Activated CD8-positive, alpha-beta T cell treated with anti-CD3 and anti-CD28 coated beads, Interleukin-2, amount 10 ng/mL, durations not matched to agents 7 days and 5 days (primary cell): ENCODE measurements at regions of chr6 and their contacts with region 1.

Region 1: GRCh38 chr6:26473758-26474438 is 16.1 kb downstream of the BTN2A1 start:
- DNase-seq: peak; percentile 89
- ATAC-seq: peak; percentile 98
- H3K4me3 Mint-ChIP-seq: peak overlapping the region; percentile 100
- H3K27ac Mint-ChIP-seq: peak overlapping the region; percentile 100
- H3K4me1 Mint-ChIP-seq: peaks cover 35% of the 10 kb centered on the region
- H3K27me3 Mint-ChIP-seq: no peaks in the 10 kb centered on the region

Region 2: DNA sequence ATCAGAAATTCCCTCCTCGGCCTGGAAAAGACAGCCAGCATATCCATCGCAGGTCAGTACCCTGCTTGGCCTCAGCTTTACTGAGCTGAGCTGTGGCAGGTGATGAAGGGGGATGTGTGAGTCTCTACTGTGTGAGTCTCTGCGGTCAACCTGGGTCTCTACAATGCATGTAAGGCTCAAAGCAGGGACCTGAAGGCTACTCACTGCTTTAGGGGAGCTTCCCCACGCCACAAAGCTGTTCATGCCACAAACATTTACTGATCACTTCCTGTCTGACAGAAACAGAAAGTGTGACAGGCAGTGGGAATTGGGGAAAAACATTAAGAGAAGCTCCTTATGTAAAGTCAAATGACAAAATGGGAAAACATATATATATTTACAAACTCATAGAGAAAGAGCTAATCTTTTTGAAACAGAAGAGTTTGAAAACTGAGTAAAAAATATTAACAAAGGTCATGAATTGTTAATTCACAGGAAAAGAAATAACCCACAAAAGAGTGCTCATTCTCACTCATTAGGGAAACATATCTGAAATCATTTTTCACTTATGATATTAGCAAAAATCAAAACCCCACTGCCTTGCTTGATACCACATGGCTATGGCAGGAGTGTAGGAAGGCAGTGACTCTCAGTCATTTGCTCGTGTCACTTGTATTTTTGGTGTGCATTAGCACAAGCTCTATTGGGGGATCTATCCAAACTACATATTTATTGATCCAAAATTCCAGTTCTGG is 27.8 kb before region 1 on chr6:
- CTCF ChIA-PET with region 1: no interaction called
- POLR2A ChIA-PET with region 1: interaction called, 11 read pairs
- DNase-seq: peak; percentile 43
- ATAC-seq: peak; percentile 71
- H3K4me3 Mint-ChIP-seq: peak overlapping the region; percentile 24
- H3K27ac Mint-ChIP-seq: peak overlapping the region; percentile 62
- H3K4me1 Mint-ChIP-seq: peaks cover 40% of the 10 kb centered on the region
- H3K27me3 Mint-ChIP-seq: no peaks in the 10 kb centered on the region

Region 3: GRCh38 chr6:26485112-26485780 is 11.3 kb after region 1 on chr6:
- CTCF ChIA-PET with region 1: interaction called, 4 read pairs
- POLR2A ChIA-PET with region 1: interaction called, 10 read pairs
- DNase-seq: no peak
- ATAC-seq: no peak
- H3K4me3 Mint-ChIP-seq: no peak overlapping the region
- H3K27ac Mint-ChIP-seq: no peak overlapping the region
- H3K4me1 Mint-ChIP-seq: peaks cover 2% of the 10 kb centered on the region
- H3K27me3 Mint-ChIP-seq: no peaks in the 10 kb centered on the region

Region 4: GRCh38 chr6:26532699-26533531 is 59.0 kb after region 1 on chr6:
- CTCF ChIA-PET with region 1: interaction called, 5 read pairs
- POLR2A ChIA-PET with region 1: interaction called, 23 read pairs
- DNase-seq: peak; percentile 95
- ATAC-seq: peak; percentile 38
- H3K4me3 Mint-ChIP-seq: peak overlapping the region; percentile 88
- H3K27ac Mint-ChIP-seq: peak overlapping the region; percentile 85
- H3K4me1 Mint-ChIP-seq: peaks cover 40% of the 10 kb centered on the region
- H3K27me3 Mint-ChIP-seq: peaks cover 2% of the 10 kb centered on the region

Region 5: DNA sequence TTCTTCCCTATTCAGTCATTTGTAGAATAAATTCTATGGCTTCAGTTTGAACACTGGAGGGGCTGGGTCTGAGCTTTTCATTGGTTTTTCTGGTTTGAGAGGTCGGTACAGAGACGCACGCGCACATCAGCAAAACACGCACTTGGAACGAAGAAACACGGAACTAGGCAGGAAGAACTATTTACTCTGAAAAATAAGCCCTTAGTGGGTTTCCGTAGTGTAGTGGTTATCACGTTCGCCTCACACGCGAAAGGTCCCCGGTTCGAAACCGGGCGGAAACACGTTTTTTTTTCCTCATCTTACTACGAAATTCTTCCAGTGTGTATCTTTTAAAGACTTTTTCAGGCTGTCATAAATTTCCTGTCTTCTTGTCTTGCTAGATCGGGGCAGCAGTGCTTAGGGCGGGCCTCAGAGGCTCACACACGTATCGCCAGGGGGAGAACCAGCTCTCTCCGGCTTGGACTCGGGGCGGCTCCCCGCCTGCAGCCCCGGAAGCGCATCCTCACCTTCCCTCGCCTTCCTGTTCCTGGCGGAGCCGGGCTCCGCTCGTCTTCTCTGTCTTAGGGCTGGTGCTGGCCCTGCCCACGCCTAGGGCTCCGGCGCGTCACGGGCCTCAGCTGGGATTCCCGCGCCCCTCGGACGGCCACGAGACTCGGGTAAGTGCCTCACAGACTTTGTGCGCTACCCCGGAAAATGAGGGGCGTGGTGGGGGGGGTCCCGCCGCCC is 64.1 kb after region 1 on chr6 and contains the start of gene HMGN4:
- CTCF ChIA-PET with region 1: interaction called, 5 read pairs
- POLR2A ChIA-PET with region 1: interaction called, 23 read pairs
- DNase-seq: peak; percentile 88
- ATAC-seq: peak; percentile 71
- H3K4me3 Mint-ChIP-seq: peak within 1 kb of the TSS; percentile 87
- H3K27ac Mint-ChIP-seq: peak within 1 kb of the TSS; percentile 99
- H3K4me1 Mint-ChIP-seq: peaks cover 58% of the 10 kb centered on the region
- H3K27me3 Mint-ChIP-seq: peaks cover 2% of the 10 kb centered on the region
- total RNA-seq, gene HMGN4: 80.8 to 84.9 TPM